RWPE1 (cell line): ENCODE measurements at regions of chr2 and their contacts with region 1.

Region 1: GRCh38 chr2:128317181-128317898 is 1.3 kb downstream of the HS6ST1 start:
- DNase-seq: no peak
- H3K27ac ChIP-seq: peak overlapping the region; percentile 16; the same call in 1 of the 2 replicates
- CTCF ChIP-seq: no peak

Region 2: GRCh38 chr2:128282976-128283810 is 34.1 kb before region 1 on chr2:
- CTCF ChIA-PET with region 1: no interaction called
- POLR2A ChIA-PET with region 1: no interaction called
- DNase-seq: no peak
- H3K27ac ChIP-seq: peak overlapping the region; percentile 52
- CTCF ChIP-seq: no peak

Region 3: DNA sequence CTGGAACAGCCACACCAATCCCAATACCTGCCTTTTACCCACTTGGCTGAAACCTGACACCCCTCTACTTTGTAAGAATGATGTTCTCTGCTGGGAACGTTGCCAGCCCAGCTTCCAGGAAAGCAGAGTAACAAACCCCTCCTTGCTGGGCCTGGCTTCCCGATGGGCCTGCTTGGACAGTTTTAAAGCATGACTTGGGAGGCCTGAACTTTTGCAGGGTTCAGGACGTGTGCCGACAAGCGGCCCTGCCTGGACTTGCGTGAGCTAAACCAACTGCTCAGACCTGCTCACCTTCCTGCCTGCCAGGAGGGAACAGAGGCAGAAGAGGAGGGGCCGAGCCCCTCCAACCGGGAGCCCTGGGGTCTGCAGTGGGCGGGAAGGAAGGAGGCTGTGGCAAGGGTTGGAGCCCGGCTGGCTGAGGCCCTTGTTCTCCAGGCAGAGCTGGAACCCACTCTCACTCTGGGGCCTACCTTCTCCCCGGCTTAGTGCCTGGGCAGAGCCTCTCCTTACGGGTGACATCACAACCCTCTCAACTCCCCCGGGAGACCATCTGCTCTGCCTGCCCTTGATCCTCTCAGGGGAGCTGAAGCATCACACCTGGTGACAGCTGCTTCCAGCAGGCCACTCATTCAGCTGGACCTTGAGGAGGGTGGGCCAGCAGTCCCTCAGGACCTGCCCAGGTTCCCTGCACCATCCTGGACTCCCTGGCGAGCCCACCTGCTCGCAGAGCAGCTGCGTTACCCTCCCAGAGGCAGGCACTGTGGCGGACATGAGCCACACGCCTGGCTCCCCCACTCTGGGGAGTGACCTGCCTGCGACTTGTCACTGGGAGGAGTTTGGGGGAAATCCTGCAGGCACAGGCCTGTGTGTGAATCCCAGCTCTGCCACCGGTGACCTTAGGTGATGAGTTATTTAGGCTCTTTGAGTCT is 11.9 kb before region 1 on chr2:
- CTCF ChIA-PET with region 1: interaction called, 10 read pairs
- POLR2A ChIA-PET with region 1: no interaction called
- DNase-seq: peak; percentile 97
- H3K27ac ChIP-seq: peak overlapping the region; percentile 98
- CTCF ChIP-seq: no peak

Region 4: DNA sequence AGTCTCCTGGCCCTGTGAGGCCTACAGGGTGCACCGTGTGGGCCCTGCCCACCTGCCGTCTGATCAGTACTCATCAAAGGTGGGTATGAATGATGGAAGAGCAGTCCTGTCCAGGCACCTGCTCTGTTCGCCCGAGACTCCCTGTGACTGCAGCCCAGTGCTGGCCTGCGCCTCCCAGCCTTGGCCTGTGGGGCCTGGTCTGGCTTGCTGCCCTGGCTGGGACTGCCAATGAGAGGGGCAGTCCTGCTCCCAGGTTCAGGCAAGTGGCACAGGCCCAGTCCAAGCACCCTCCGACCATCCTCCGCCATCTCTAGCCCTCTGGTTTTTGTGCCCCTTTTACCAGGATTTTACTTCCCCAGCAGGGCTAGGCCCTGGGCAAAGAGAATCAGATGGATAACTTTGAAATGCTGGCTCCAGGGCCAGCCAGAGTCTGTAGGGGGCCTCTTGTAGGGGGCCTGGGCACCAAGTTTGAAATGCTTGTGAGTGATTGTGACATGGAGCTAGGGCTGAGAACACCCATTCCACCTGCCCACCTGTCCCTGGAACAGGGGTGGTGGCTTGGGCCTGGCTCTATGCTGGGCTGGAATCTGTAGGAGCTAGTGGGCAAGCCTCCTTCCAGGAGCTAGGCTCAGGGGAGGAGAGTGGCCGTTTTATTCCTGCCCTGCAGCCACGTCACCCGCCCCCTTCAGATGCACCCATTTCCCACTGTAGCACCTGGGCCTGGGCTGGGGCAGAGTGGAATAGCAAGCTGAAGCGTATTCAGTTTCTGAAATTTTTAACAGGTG is 10.0 kb after region 1 on chr2:
- CTCF ChIA-PET with region 1: no interaction called
- POLR2A ChIA-PET with region 1: no interaction called
- DNase-seq: no peak
- H3K27ac ChIP-seq: no peak overlapping the region
- CTCF ChIP-seq: no peak